Activated naive CD4-positive, alpha-beta T cell treated with anti-CD3 and anti-CD28 coated beads for 36 hours (primary cell): ENCODE measurements at regions of chr6 and their contacts with region 1.

Region 1: GRCh38 chr6:108526739-108527174 is 34.0 kb upstream of the FOXO3 start:
- DNase-seq: no peak
- H3K4me3 Mint-ChIP-seq: no peak overlapping the region
- H3K27ac Mint-ChIP-seq: no peak overlapping the region
- H3K4me1 Mint-ChIP-seq: no peaks in the 10 kb centered on the region
- H3K27me3 Mint-ChIP-seq: no peaks in the 10 kb centered on the region

Region 2: GRCh38 chr6:107977283-107977682 is 549.5 kb before region 1 on chr6:
- CTCF ChIA-PET with region 1: interaction called, 3 read pairs
- intact Hi-C with region 1: loop called (anchors 2 kb)
- DNase-seq: no peak
- H3K4me3 Mint-ChIP-seq: no peak overlapping the region
- H3K27ac Mint-ChIP-seq: no peak overlapping the region
- H3K4me1 Mint-ChIP-seq: no peaks in the 10 kb centered on the region
- H3K27me3 Mint-ChIP-seq: no peaks in the 10 kb centered on the region

Region 3: GRCh38 chr6:108029226-108029921 is 497.4 kb before region 1 on chr6:
- CTCF ChIA-PET with region 1: no interaction called
- intact Hi-C with region 1: no loop called
- DNase-seq: no peak
- H3K4me3 Mint-ChIP-seq: no peak overlapping the region
- H3K27ac Mint-ChIP-seq: no peak overlapping the region
- H3K4me1 Mint-ChIP-seq: no peaks in the 10 kb centered on the region
- H3K27me3 Mint-ChIP-seq: no peaks in the 10 kb centered on the region

Region 4: DNA sequence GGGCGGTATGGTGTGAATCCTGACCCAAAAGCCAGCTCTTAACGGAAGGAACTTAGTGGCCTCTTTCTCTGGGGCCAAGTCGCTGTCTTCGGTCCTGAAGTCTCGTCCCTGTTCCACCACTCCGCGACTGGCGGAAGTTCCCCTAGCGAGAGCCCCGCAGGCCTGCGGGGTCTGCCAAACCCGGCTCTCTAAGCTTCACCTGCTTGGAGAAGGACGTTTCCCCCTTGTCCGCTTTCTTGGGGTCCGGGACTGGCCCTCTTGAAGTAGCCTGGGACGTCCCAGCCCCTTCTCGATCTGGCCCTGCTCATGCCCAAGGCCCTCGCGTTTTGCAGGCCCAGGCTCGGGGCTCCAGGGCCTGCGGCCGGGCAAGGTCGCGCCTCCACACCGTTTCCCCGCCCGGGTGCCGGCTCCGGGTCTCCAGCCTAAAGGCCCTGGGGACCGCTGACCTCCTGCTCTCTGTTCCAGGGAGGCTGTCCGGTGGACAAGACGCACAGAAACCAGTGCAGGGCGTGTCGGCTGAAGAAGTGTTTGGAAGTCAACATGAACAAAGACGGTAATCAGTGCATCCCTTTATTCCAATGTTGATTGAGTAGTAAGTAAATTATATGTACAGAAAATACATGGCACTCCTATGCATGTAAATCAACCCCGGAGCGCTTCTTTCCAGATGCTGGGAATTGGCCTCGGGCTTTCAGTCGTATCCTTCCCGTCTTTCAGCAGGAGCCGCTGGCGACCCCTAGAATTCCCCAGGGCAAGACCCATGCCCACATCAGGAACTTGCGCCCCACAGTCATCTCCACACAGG is 352.2 kb before region 1 on chr6:
- CTCF ChIA-PET with region 1: interaction called, 4 read pairs
- intact Hi-C with region 1: loop called (anchors 10 kb)
- DNase-seq: peak; percentile 57
- H3K4me3 Mint-ChIP-seq: no peak overlapping the region
- H3K27ac Mint-ChIP-seq: no peak overlapping the region
- H3K4me1 Mint-ChIP-seq: peaks cover 21% of the 10 kb centered on the region
- H3K27me3 Mint-ChIP-seq: peaks cover 76% of the 10 kb centered on the region